ENCODE measurements at regions of chr7 and their contacts with region 1.

Region 1: DNA sequence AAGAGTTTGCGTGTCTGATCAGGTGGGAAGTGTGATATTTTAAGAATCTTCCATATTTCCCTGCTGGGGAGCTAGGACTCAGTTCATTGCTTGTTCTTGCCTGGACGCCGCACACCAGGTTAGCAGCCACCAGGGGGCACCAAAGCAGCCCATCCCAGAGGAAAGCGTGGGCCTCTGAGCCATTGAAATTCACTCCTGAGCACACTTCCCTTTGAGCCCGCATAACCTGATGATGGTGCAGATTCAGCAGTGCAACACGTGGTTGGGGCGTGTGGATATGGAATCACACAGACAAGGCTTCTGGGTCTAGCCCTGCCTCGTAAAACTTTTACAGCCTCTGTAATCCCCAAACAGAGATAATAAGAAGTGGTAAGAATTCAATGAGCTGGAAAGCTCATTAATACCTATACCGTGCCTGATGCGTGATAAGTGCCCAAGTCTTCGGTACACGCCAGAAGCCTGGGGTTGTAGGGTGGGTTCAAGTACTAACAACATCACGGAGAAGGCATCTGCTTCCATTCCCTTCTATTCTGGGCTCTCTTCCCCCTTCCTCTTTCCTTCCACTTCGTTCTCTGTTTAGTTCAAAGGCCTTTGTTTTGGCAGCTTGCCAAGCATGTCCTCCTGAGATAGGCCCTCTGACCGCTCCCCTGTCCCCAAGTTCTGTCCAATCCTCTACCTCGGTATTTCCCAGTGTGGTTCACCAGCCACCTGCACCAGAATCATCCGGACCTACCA is 130.1 kb upstream of the KMT2E start:
- DNase-seq: peak; percentile 86
- H3K4me3 Mint-ChIP-seq: no peak overlapping the region
- H3K27ac Mint-ChIP-seq: no peak overlapping the region
- H3K4me1 Mint-ChIP-seq: no peaks in the 10 kb centered on the region
- H3K27me3 Mint-ChIP-seq: peaks cover 2% of the 10 kb centered on the region
- CTCF ChIP-seq: peak; percentile 86

Region 2: GRCh38 chr7:103857435-103857834 is 1026.5 kb before region 1 on chr7:
- CTCF ChIA-PET with region 1: no interaction called
- POLR2A ChIA-PET with region 1: no interaction called
- intact Hi-C with region 1: no loop called
- DNase-seq: no peak
- H3K4me3 Mint-ChIP-seq: no peak overlapping the region
- H3K27ac Mint-ChIP-seq: no peak overlapping the region
- H3K4me1 Mint-ChIP-seq: no peaks in the 10 kb centered on the region
- H3K27me3 Mint-ChIP-seq: peaks cover 22% of the 10 kb centered on the region
- CTCF ChIP-seq: no peak

Region 3: DNA sequence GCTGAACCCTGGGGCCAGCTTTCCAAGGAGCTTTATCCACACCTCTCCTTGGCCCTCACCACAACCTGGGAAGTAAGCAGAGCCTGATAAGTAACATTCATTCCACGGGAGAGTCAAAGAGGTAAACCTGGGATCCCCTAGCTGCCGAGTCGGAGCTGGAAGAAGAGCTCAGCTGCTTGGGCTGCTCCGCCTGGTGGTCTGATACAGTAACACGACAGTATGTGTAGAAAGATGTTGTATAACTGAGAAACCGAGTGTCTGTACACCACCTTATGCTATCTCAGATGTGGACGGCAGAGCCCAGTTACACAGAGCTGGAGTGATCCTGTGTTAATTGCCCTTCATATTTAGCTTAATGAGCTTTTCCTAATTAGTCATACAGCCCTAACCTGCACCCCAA is 21.2 kb before region 1 on chr7:
- CTCF ChIA-PET with region 1: interaction called, 24 read pairs
- POLR2A ChIA-PET with region 1: no interaction called
- intact Hi-C with region 1: no loop called
- DNase-seq: peak; percentile 44
- H3K4me3 Mint-ChIP-seq: no peak overlapping the region
- H3K27ac Mint-ChIP-seq: no peak overlapping the region
- H3K4me1 Mint-ChIP-seq: no peaks in the 10 kb centered on the region
- H3K27me3 Mint-ChIP-seq: peaks cover 90% of the 10 kb centered on the region
- CTCF ChIP-seq: peak; percentile 16

Region 4: DNA sequence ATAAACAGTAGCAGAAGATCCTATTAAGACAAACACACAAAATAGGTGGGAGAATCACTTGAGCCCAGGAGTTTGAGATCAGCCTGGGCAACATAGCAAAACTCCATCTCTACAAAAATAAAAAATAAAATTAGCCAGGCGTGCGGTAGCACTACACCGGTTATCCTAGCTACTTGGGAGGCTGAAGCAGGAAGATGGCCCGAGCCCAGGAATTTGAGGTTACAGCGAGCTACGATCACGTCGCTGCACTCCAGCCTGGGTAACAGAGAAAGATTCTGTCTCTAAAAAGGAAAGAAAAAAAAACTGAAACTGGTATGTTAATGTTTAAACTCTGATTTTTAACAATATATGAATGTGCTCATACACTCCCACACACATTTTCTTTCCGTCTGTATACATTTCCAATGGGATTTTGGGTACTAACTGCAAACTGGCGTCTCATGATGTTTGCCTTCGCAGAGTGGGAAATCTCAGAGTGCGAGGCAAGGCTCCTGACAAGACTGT is 10.5 kb before region 1 on chr7:
- CTCF ChIA-PET with region 1: interaction called, 24 read pairs
- POLR2A ChIA-PET with region 1: no interaction called
- intact Hi-C with region 1: no loop called
- DNase-seq: no peak
- H3K4me3 Mint-ChIP-seq: no peak overlapping the region
- H3K27ac Mint-ChIP-seq: no peak overlapping the region
- H3K4me1 Mint-ChIP-seq: no peaks in the 10 kb centered on the region
- H3K27me3 Mint-ChIP-seq: peaks cover 18% of the 10 kb centered on the region
- CTCF ChIP-seq: no peak

Region 5: DNA sequence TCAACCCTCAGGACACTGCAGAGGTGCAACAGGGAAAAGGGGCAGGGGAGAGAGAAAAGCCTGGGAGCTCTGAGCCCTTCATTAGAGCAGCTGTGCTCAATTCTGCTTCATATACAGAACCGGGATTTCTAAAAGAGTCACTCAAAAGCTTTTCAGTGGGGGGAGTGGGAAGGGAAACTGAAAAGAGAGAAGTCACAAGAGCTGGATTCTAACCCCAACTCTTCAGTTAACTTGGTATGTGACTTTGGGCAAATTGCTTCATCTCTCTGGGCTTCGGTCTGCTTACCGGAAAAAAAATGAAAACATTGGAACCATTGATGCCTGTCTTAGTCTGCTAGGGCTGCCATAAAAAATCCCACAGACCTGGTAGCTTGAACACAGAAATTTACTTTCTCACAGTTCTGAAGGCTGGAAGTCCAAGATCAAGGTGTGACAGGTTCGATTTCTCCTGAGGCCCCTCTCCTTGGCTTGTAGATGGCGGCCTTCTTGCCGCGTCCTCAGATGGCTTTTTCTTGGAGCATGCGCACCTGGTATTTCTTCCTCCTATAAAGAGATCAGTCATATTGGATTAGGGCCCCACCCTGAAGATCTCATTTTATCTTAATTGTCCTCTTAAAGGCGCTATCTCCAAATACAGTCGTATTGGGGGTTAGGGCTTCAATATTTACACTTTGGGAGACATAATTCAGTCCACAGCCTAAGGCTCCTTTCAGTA is 11.8 kb after region 1 on chr7:
- CTCF ChIA-PET with region 1: interaction called, 61 read pairs
- POLR2A ChIA-PET with region 1: no interaction called
- intact Hi-C with region 1: no loop called
- DNase-seq: no peak
- H3K4me3 Mint-ChIP-seq: no peak overlapping the region
- H3K27ac Mint-ChIP-seq: no peak overlapping the region
- H3K4me1 Mint-ChIP-seq: no peaks in the 10 kb centered on the region
- H3K27me3 Mint-ChIP-seq: peaks cover 8% of the 10 kb centered on the region
- CTCF ChIP-seq: no peak

Region 6: GRCh38 chr7:104900525-104901239 is 16.8 kb after region 1 on chr7:
- CTCF ChIA-PET with region 1: interaction called, 61 read pairs
- POLR2A ChIA-PET with region 1: no interaction called
- intact Hi-C with region 1: no loop called
- DNase-seq: no peak
- H3K4me3 Mint-ChIP-seq: no peak overlapping the region
- H3K27ac Mint-ChIP-seq: no peak overlapping the region
- H3K4me1 Mint-ChIP-seq: no peaks in the 10 kb centered on the region
- H3K27me3 Mint-ChIP-seq: peaks cover 2% of the 10 kb centered on the region
- CTCF ChIP-seq: no peak

Region 7: DNA sequence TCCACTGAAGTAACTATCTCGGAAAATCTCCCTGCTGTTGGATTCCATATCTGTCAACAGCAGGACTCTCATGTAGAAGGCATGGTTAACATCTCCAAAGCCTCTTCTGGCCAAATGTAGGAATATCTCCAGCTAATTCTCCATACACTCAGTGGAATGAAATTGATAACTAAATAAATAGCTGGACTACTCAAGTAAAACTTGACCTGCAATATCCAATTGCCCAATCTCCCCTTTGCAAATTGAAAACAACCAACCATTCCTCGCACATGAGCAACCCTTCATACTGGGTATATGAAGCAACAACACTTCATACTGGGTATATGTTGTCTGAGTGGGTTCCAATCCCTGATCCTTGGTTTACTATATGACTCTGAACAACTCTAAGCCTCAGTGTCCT is 24.8 kb after region 1 on chr7:
- CTCF ChIA-PET with region 1: interaction called, 28 read pairs
- POLR2A ChIA-PET with region 1: no interaction called
- intact Hi-C with region 1: no loop called
- DNase-seq: no peak
- H3K4me3 Mint-ChIP-seq: no peak overlapping the region
- H3K27ac Mint-ChIP-seq: no peak overlapping the region
- H3K4me1 Mint-ChIP-seq: no peaks in the 10 kb centered on the region
- H3K27me3 Mint-ChIP-seq: peaks cover 54% of the 10 kb centered on the region
- CTCF ChIP-seq: no peak

Region 8: GRCh38 chr7:105589356-105590077 is 705.6 kb after region 1 on chr7:
- CTCF ChIA-PET with region 1: no interaction called
- POLR2A ChIA-PET with region 1: no interaction called
- intact Hi-C with region 1: loop called (anchors 5 kb)
- DNase-seq: peak; percentile 83
- H3K4me3 Mint-ChIP-seq: no peak overlapping the region
- H3K27ac Mint-ChIP-seq: no peak overlapping the region
- H3K4me1 Mint-ChIP-seq: no peaks in the 10 kb centered on the region
- H3K27me3 Mint-ChIP-seq: no peaks in the 10 kb centered on the region
- CTCF ChIP-seq: peak; percentile 58